CD4-positive, alpha-beta T cell (primary cell): ENCODE measurements at regions of chr14 and their contacts with region 1.

Region 1: GRCh38 chr14:55026793-55027561 is at the starts of genes SOCS4 and WDHD1:
- DNase-seq: peak; percentile 90 to 98 (median 94)
- ATAC-seq: peak; percentile 87
- H3K4me3 ChIP-seq: peak within 1 kb of the TSS; percentile 79
- H3K4me3 Mint-ChIP-seq: peak within 1 kb of the TSS; percentile 91
- H3K27ac ChIP-seq: peak within 1 kb of the TSS; percentile 78 to 87
- H3K27ac Mint-ChIP-seq: peak within 1 kb of the TSS; percentile 88
- H3K4me1 ChIP-seq: peaks cover 9% of the 10 kb centered on the region
- H3K4me1 Mint-ChIP-seq: peaks cover 62% of the 10 kb centered on the region
- H3K27me3 ChIP-seq: no peaks in the 10 kb centered on the region
- H3K27me3 Mint-ChIP-seq: no peaks in the 10 kb centered on the region
- CTCF ChIP-seq: peak; percentile 9
- total RNA-seq, gene SOCS4: 19.5 to 20.7 TPM
- total RNA-seq, gene WDHD1: 1.8 to 2.2 TPM

Region 2: DNA sequence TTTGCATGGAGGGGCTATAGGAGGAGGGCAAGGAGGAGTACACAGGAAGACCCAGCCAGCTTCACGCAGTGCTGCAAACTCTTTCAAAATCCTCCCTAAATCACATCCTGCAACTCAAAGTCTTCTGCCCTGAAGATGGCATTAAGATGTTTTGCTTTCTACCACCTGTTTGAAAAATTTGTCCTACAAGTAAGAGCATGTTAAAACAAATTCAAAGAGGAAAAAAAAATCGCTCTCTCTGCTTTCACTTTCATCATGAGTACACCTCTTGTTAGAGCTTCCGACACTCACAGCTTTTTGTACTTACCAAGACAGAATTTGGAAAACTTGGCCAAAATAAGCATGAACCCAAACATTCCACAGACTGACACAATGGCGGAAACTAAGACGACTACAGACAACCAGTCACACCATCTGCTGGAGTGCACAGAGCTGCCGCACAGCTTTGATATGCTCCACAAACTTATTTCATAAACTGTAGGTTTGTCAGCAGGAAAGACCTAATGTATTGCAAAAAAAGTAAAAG is 145.7 kb before region 1 on chr14:
- CTCF ChIA-PET with region 1: interaction called, 3 read pairs
- POLR2A ChIA-PET with region 1: interaction called, 12 read pairs
- intact Hi-C with region 1: no loop called
- DNase-seq: peak in 7 of 14 experiments; percentile 11 to 77 (median 45)
- ATAC-seq: peak; percentile 73
- H3K4me3 ChIP-seq: peak overlapping the region; percentile 62
- H3K4me3 Mint-ChIP-seq: peak overlapping the region; percentile 95
- H3K27ac ChIP-seq: peak overlapping the region; percentile 61 to 74
- H3K27ac Mint-ChIP-seq: peak overlapping the region; percentile 88
- H3K4me1 ChIP-seq: peaks cover 30% of the 10 kb centered on the region
- H3K4me1 Mint-ChIP-seq: peaks cover 59% of the 10 kb centered on the region
- H3K27me3 ChIP-seq: no peaks in the 10 kb centered on the region
- H3K27me3 Mint-ChIP-seq: no peaks in the 10 kb centered on the region
- CTCF ChIP-seq: no peak

Region 3: DNA sequence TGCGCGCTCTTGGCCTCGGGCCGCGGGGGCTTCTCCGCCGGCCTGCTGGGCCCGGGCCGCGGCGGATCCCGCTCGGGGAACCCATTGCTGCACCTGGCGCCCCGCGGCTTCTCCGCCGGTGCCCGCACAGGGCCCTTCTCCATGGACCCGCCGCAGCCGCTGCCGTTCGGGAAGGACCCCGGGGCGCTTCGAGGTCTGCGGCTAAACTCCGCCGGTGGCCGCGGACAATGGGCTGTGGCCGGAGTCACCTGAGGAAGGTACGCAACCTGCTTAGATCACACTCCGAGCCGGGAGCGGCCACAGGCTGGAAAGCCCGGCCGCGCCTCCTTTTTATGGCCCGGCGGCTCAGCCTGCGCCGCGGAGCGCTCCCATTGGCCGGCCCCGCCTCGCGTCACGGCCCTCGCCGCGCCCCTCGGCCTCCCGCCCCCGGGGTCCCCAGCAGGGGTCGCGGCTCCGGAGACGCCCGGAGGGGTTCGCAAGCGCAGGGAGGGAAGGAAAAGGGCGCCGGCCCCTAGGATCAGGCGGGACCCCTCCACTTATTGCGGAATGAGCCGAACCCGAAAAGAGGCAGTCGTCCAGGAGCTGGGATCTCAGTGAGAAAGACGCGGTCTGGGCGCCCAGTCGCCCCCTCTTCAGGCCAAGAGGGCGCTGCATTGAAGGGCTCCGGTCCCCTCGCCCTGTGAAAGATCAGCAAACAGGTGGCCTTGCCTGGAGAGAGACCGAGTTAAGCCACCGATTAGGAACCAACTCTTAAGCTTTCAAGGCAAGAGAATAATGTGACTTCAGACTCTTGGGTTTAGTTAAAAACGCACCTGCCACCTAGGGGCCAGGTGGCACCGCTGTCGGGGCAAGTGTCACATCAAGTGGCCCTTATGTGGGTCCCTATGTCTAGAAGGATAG is 124.2 kb before region 1 on chr14 and contains the start of gene GCH1:
- CTCF ChIA-PET with region 1: no interaction called
- POLR2A ChIA-PET with region 1: interaction called, 4 read pairs
- intact Hi-C with region 1: loop called (anchors 1 to 5 kb)
- DNase-seq: peak; percentile 42 to 91 (median 65)
- ATAC-seq: peak; percentile 69
- H3K4me3 ChIP-seq: peak within 1 kb of the TSS; percentile 97
- H3K4me3 Mint-ChIP-seq: peak within 1 kb of the TSS; percentile 97
- H3K27ac ChIP-seq: peak within 1 kb of the TSS; percentile 92 to 95
- H3K27ac Mint-ChIP-seq: peak within 1 kb of the TSS; percentile 85
- H3K4me1 ChIP-seq: peaks cover 35% of the 10 kb centered on the region
- H3K4me1 Mint-ChIP-seq: peaks cover 24% of the 10 kb centered on the region
- H3K27me3 ChIP-seq: no peaks in the 10 kb centered on the region
- H3K27me3 Mint-ChIP-seq: no peaks in the 10 kb centered on the region
- CTCF ChIP-seq: peak; percentile 80
- total RNA-seq, gene GCH1: 18.4 to 20.4 TPM

Region 4: GRCh38 chr14:55043528-55043927 is 16.6 kb after region 1 on chr14:
- CTCF ChIA-PET with region 1: interaction called, 16 read pairs
- POLR2A ChIA-PET with region 1: interaction called, 5 read pairs
- intact Hi-C with region 1: no loop called
- DNase-seq: no peak
- ATAC-seq: no peak
- H3K4me3 ChIP-seq: no peak overlapping the region
- H3K4me3 Mint-ChIP-seq: no peak overlapping the region
- H3K27ac ChIP-seq: no peak overlapping the region
- H3K27ac Mint-ChIP-seq: no peak overlapping the region
- H3K4me1 ChIP-seq: no peaks in the 10 kb centered on the region
- H3K4me1 Mint-ChIP-seq: no peaks in the 10 kb centered on the region
- H3K27me3 ChIP-seq: no peaks in the 10 kb centered on the region
- H3K27me3 Mint-ChIP-seq: no peaks in the 10 kb centered on the region
- CTCF ChIP-seq: no peak

Region 5: GRCh38 chr14:55085060-55085660 is 58.2 kb after region 1 on chr14:
- CTCF ChIA-PET with region 1: no interaction called
- POLR2A ChIA-PET with region 1: no interaction called
- intact Hi-C with region 1: loop called in 1 of 2 experiments (anchors 10 kb)
- DNase-seq: no peak
- ATAC-seq: no peak
- H3K4me3 ChIP-seq: no peak overlapping the region
- H3K4me3 Mint-ChIP-seq: no peak overlapping the region
- H3K27ac ChIP-seq: no peak overlapping the region
- H3K27ac Mint-ChIP-seq: no peak overlapping the region
- H3K4me1 ChIP-seq: peaks cover 4% of the 10 kb centered on the region
- H3K4me1 Mint-ChIP-seq: peaks cover 4% of the 10 kb centered on the region
- H3K27me3 ChIP-seq: no peaks in the 10 kb centered on the region
- H3K27me3 Mint-ChIP-seq: no peaks in the 10 kb centered on the region
- CTCF ChIP-seq: no peak

Region 6: GRCh38 chr14:55191203-55192053 is 164.5 kb after region 1 on chr14 and contains the start of gene DLGAP5:
- CTCF ChIA-PET with region 1: no interaction called
- POLR2A ChIA-PET with region 1: interaction called, 3 read pairs
- intact Hi-C with region 1: loop called in 1 of 2 experiments (anchors 5 kb)
- DNase-seq: peak; percentile 71 to 96 (median 80)
- ATAC-seq: peak; percentile 98
- H3K4me3 ChIP-seq: peak within 1 kb of the TSS; percentile 74
- H3K4me3 Mint-ChIP-seq: peak within 1 kb of the TSS; percentile 90
- H3K27ac ChIP-seq: peak within 1 kb of the TSS in 1 of 2 donors; percentile 40
- H3K27ac Mint-ChIP-seq: peak within 1 kb of the TSS; percentile 14
- H3K4me1 ChIP-seq: peaks cover 14% of the 10 kb centered on the region
- H3K4me1 Mint-ChIP-seq: peaks cover 21% of the 10 kb centered on the region
- H3K27me3 ChIP-seq: no peaks in the 10 kb centered on the region
- H3K27me3 Mint-ChIP-seq: no peaks in the 10 kb centered on the region
- CTCF ChIP-seq: no peak
- total RNA-seq, gene DLGAP5: 0.25 TPM in 1 of 2 experiments, not detected in the other